GM12878 (cell line): ENCODE measurements at regions of chr7 and their contacts with region 1.

Region 1: DNA sequence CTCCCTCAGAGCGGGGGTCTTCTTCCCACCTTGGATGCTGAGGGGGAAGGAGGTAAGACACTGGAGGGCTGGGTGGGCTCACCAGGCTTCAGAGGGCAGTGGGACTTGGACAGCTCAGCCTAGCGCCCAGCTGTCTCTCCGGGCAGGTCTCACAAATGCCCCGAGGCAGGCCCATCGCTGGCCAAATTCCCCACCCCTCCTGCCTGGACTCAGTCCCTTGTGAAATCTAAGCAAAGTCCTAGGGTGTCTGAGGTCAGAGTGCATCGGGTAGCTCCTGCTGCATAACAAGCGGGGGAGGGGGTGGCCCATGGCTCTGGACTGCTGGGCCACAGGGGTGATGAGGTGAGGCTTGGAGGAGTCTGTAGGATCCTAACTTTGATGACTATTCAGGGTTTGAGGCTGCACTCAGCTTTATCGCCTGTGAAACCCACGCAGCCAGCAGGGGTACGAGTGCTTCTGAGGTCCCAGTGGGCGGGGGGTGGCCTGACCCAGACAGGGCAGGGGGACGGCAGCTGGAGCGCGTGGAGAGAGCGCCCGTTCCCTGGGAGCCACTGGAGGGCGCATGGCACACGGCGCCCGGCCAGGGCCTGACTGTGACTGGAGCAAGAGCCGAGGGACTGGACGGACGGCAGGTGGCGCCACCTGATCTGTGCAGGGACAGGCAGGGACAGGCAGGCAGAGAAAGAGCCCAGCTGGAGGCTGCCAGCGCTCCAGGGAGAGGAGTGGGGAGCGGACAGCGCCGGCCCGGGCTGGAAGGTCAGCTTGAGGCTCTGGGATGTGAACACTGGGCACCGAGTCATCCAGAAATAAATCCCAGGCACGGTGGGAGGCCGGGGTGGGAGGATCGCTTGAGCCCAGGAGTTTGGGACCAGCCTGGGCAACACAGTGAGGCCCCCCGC is 10.0 kb downstream of the CYP2W1 start:
- DNase-seq: peak; percentile 72
- ATAC-seq: peak; percentile 97
- H3K4me3 ChIP-seq: no peak overlapping the region
- H3K27ac ChIP-seq: no peak overlapping the region
- H3K4me1 ChIP-seq: peaks cover 6% of the 10 kb centered on the region
- H3K27me3 ChIP-seq: no peaks in the 10 kb centered on the region
- CTCF ChIP-seq: peak; percentile 99 to 100 (median 100); a peak in 5 of 6 replicates
- EP300 ChIP-seq: no peak
- POLR2A ChIP-seq: peak; percentile 71
- RAD21 ChIP-seq: peak; percentile 98

Region 2: GRCh38 chr7:909358-910329 is 83.3 kb before region 1 on chr7:
- CTCF ChIA-PET with region 1: interaction called, 19 read pairs
- POLR2A ChIA-PET with region 1: no interaction called
- RAD21 ChIA-PET with region 1: interaction called, 20 read pairs
- SMC1A ChIA-PET with region 1: interaction called, 9 read pairs
- in situ Hi-C with region 1: no loop called
- intact Hi-C with region 1: no loop called
- DNase-seq: no peak
- ATAC-seq: peak; percentile 69
- H3K4me3 ChIP-seq: peak overlapping the region; percentile 51; the same call in 1 of the 2 replicates
- H3K27ac ChIP-seq: peak overlapping the region; percentile 38
- H3K4me1 ChIP-seq: peaks cover 16% of the 10 kb centered on the region
- H3K27me3 ChIP-seq: no peaks in the 10 kb centered on the region
- CTCF ChIP-seq: no peak
- EP300 ChIP-seq: no peak
- POLR2A ChIP-seq: no peak
- RAD21 ChIP-seq: no peak

Region 3: DNA sequence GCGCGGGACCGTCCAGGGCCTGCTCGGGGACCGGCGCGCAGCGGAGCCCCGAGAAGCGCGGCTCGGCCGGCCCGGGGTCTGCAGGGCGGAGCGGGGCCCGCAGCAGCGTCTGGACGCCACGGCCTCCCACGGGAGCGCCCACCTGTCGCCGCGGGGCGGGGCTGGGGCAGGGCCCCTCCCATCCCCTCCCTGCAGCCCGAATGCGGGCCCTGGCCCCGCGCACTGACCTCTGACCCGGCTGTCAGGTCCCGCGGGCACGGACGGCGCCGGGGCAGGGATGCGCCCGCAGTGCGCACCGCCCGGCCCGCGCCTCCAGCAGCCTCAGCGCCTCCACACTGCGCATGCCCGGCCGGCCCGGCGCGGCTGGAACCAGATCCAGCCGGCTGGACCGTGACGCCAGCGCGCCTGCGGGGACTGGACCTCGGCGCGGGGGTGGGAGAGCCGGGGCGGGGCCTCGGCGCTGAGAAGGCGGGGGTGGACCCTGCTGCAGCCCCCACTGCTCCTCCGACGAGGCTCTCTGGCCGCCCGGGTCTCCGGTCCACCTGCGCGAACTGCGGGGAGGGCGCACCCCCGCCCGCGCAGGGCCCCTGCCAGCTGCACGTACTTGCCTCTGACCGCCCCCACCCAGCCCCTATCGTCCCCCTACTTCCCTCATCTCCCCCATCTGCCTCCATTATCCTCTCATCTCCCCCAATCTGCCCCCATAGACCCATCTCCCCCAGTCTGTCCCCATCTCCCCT is 35.2 kb after region 1 on chr7:
- CTCF ChIA-PET with region 1: interaction called, 85 read pairs
- POLR2A ChIA-PET with region 1: interaction called, 6 read pairs
- RAD21 ChIA-PET with region 1: interaction called, 59 read pairs
- SMC1A ChIA-PET with region 1: interaction called, 71 read pairs
- in situ Hi-C with region 1: no loop called
- intact Hi-C with region 1: loop called (anchors 1 kb)
- DNase-seq: no peak
- ATAC-seq: peak; percentile 62
- H3K4me3 ChIP-seq: peak overlapping the region; percentile 99
- H3K27ac ChIP-seq: peak overlapping the region; percentile 95
- H3K4me1 ChIP-seq: peaks cover 36% of the 10 kb centered on the region
- H3K27me3 ChIP-seq: no peaks in the 10 kb centered on the region
- CTCF ChIP-seq: no peak
- EP300 ChIP-seq: no peak; a peak in 1 of 4 replicates
- POLR2A ChIP-seq: peak; percentile 84
- RAD21 ChIP-seq: no peak

Region 4: DNA sequence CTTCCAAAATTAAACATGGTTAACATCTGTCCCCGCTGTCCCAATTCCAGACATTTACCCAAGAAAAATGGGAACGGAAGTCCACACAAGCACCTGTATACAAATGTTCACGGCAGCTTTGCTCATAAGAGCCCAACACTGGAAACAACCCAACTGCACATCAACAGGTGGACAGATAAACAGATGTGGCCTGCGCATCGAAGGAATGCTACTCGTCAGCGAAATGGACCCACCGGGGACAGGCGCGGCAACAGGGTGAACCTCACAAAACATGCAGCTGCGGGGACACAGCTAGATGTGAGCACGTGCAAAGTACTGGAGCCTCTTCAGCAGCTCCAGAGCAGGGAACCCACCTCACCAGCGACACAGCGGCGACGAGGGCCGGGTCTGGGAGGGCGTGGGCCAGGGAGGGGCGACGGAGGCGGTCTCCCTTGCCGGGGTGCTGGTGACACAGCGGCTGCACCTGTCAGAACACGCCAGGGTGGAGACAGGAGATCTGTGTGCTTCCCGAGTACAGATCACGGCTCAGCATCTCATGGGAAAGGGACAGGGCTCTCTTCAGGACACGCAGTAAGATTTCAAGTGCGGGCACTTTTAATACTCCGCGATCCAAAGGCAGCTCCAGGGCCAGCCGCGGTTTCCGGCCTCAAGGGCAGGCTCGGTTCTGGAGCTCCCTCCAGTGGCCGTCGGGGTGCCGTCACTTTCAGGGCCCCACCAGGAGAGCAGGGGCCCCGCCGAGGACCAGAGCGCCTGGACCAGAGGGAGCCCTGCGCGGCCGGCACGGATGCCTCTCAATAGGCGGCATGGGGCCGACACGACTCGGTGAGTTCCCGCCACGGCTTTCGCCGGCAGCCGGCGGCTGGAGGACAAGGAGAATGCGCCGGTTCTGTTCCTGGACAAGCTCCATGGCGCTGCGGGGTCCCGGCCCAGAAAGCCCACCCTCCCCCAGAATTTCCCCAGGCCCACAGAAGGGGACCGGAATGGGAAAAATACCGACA is 72.6 kb after region 1 on chr7:
- CTCF ChIA-PET with region 1: interaction called, 280 read pairs
- POLR2A ChIA-PET with region 1: interaction called, 29 read pairs
- RAD21 ChIA-PET with region 1: interaction called, 196 read pairs
- SMC1A ChIA-PET with region 1: interaction called, 121 read pairs
- in situ Hi-C with region 1: loop called (anchors 5 kb)
- intact Hi-C with region 1: loop called (anchors 1 kb)
- DNase-seq: no peak
- ATAC-seq: peak; percentile 91
- H3K4me3 ChIP-seq: peak overlapping the region; percentile 51; the same call in 1 of the 2 replicates
- H3K27ac ChIP-seq: no peak overlapping the region
- H3K4me1 ChIP-seq: peaks cover 26% of the 10 kb centered on the region
- H3K27me3 ChIP-seq: no peaks in the 10 kb centered on the region
- CTCF ChIP-seq: peak; percentile 86 to 98 (median 93); a peak in 5 of 6 replicates
- EP300 ChIP-seq: no peak
- POLR2A ChIP-seq: no peak
- RAD21 ChIP-seq: peak; percentile 95

Region 5: DNA sequence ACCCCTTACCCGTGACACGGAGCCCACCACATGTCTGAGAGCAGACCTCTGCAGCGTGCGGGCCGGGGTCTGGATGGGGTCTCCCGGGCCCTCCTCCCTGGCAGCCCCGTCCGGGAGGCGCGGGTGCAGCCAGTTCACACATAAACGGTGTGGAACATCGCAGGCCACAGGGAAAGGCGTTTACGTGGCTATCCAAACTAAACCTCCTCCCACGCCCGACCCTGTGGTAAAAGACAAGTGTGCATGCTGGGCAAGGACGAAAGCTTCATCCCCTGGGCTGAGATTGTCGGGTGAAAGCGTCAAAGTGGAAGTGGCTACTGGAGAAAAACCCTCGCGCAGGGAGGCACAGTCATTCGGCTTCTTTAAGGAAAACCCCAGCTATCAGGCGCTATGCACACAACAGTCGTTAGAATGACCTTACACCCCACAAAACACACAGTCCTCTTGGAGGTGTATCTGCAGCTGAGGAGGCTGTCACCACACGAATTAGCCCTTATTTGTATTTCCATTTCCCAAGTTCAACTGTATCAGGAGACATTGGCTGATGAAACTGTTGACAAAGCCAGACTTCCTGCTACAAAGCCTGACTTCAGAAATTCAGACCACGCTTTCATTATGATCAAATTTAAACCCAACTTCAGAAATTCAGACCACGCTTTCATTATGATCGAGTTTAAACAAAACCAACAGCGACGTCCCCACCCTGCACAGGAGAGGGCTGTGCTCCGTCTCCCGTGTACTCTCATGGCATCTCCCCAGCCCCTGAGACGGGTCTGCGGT is 110.2 kb after region 1 on chr7:
- CTCF ChIA-PET with region 1: interaction called, 12 read pairs
- POLR2A ChIA-PET with region 1: interaction called, 5 read pairs
- RAD21 ChIA-PET with region 1: interaction called, 4 read pairs
- SMC1A ChIA-PET with region 1: interaction called, 8 read pairs
- in situ Hi-C with region 1: no loop called
- intact Hi-C with region 1: no loop called
- DNase-seq: peak; percentile 73
- ATAC-seq: peak; percentile 79
- H3K4me3 ChIP-seq: peak overlapping the region; percentile 64
- H3K27ac ChIP-seq: peak overlapping the region; percentile 70
- H3K4me1 ChIP-seq: peaks cover 33% of the 10 kb centered on the region
- H3K27me3 ChIP-seq: no peaks in the 10 kb centered on the region
- CTCF ChIP-seq: no peak
- EP300 ChIP-seq: peak; percentile 38 to 78; a peak in 3 of 4 replicates
- POLR2A ChIP-seq: peak; percentile 62; the same call in 1 of the 2 replicates
- RAD21 ChIP-seq: no peak

Region 6: DNA sequence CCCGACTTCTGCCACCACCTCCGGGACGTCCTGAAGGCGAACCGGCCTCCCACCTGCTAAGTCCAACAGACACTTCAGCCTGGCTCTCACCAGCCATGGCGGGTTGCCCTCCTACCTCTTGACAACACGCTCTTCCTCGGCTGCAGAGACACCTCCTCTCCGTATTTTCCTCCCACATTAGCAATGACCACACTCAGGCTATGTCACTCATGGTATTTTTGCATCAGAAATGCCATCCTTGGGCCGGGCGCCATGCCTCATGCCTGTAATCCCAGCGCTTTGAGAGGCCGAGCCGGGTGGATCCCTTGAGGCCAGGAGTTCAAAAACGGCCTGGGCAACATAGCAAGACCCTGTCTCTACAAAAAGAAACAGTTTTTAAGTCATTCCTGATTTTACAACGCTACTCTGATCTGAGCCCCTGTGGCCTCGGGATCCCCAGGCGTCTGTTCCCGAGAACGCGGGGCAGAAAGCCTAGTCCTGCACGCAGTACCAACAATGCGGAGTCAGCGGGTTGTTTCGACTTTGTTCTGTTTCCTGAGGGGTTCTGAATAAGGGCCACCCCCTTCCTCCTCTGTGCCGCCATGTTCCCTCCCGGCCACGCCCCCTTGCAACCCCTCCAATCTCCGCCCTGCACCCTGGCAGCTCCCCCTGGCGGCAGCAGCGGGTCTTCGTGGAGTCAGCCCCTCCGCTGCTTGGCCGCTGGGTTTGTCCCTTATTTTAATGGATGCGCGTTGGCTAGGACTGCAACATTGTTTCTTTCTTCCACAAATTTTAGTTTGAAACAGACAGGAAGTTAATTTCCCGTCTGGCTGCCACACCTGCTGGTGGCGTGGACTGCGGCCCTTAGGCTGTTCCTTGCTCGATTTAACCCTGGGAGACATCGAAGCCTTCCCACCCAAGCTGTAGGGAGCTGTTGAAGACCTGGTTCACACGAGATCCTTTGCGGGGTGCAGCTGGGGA is 176.7 kb after region 1 on chr7:
- CTCF ChIA-PET with region 1: interaction called, 115 read pairs
- POLR2A ChIA-PET with region 1: interaction called, 9 read pairs
- RAD21 ChIA-PET with region 1: interaction called, 4 read pairs
- SMC1A ChIA-PET with region 1: interaction called, 35 read pairs
- in situ Hi-C with region 1: no loop called
- intact Hi-C with region 1: loop called (anchors 1 kb)
- DNase-seq: peak; percentile 56
- ATAC-seq: peak; percentile 100
- H3K4me3 ChIP-seq: peak overlapping the region; percentile 47
- H3K27ac ChIP-seq: peak overlapping the region; percentile 82
- H3K4me1 ChIP-seq: peaks cover 9% of the 10 kb centered on the region
- H3K27me3 ChIP-seq: no peaks in the 10 kb centered on the region
- CTCF ChIP-seq: peak; percentile 90 to 98 (median 97)
- EP300 ChIP-seq: no peak
- POLR2A ChIP-seq: peak; percentile 74; the same call in 1 of the 2 replicates
- RAD21 ChIP-seq: peak; percentile 63